SK-N-SH (cell line): ENCODE measurements at regions of chr2 and their contacts with region 1.

Region 1: DNA sequence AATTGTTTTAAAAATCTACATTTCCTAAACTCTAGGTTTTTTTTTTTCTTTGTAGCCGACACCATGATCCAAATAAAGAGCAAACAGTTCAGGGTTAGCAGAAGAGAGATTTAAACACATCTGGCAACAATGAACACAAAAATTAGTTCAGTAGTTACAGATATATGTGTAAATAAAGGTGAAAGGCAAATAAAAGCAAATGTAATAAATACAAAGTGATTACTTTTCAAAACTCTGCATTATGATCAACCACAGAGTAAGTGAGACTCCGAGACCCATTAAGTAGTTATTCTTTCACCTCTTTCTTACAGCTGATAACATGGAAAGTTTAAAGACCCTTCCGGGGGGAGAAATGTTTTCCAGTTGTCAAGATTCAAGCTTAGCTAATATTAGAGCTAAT is 716 bp downstream of the CALCRL start:
- DNase-seq: no peak
- H3K4me3 ChIP-seq: no peak overlapping the region
- H3K27ac ChIP-seq: no peak overlapping the region
- H3K4me1 ChIP-seq: peaks cover 0 to 6% of the 10 kb centered on the region in 2 experiments; a peak in 2 of 4 replicates
- H3K27me3 ChIP-seq: no peaks in the 10 kb centered on the region
- CTCF ChIP-seq: no peak
- EP300 ChIP-seq: no peak
- RAD21 ChIP-seq: no peak

Region 2: GRCh38 chr2:186903216-186903615 is 544.1 kb before region 1 on chr2:
- CTCF ChIA-PET with region 1: interaction called, 10 read pairs
- POLR2A ChIA-PET with region 1: no interaction called
- DNase-seq: peak; percentile 3
- H3K4me3 ChIP-seq: no peak overlapping the region
- H3K27ac ChIP-seq: no peak overlapping the region
- H3K4me1 ChIP-seq: no peaks in the 10 kb centered on the region; a peak in 1 of 4 replicates
- H3K27me3 ChIP-seq: no peaks in the 10 kb centered on the region
- CTCF ChIP-seq: peak; percentile 70
- EP300 ChIP-seq: no peak
- RAD21 ChIP-seq: peak; percentile 61

Region 3: GRCh38 chr2:187138265-187138664 is 309.1 kb before region 1 on chr2:
- CTCF ChIA-PET with region 1: interaction called, 10 read pairs
- POLR2A ChIA-PET with region 1: no interaction called
- DNase-seq: peak; percentile 3
- H3K4me3 ChIP-seq: no peak overlapping the region
- H3K27ac ChIP-seq: no peak overlapping the region
- H3K4me1 ChIP-seq: no peaks in the 10 kb centered on the region
- H3K27me3 ChIP-seq: no peaks in the 10 kb centered on the region
- CTCF ChIP-seq: peak; percentile 69
- EP300 ChIP-seq: no peak
- RAD21 ChIP-seq: peak; percentile 74

Region 4: DNA sequence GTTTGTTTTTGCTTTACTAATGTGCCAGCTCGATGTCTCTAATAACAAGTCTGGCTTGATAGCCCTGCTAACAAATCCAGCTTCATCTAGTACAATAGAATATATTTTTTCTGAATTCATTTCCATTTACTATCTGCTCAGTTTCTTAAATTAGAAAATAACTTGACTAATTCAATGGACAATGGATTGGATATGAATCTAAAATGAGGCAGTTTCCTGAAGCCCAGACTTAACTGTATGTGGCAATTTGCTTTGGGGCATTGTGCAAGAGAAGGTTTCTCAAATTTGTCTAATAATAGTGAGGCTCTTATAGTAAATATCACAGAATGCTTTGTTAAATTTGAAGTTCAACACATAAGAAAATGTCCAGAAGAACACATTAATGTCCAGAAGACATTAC is 25.1 kb before region 1 on chr2:
- CTCF ChIA-PET with region 1: no interaction called
- POLR2A ChIA-PET with region 1: no interaction called
- DNase-seq: no peak
- H3K4me3 ChIP-seq: no peak overlapping the region
- H3K27ac ChIP-seq: no peak overlapping the region
- H3K4me1 ChIP-seq: no peaks in the 10 kb centered on the region; a peak in 1 of 4 replicates
- H3K27me3 ChIP-seq: no peaks in the 10 kb centered on the region
- CTCF ChIP-seq: no peak
- EP300 ChIP-seq: no peak
- RAD21 ChIP-seq: no peak

Region 5: GRCh38 chr2:187509667-187510417 is 62.5 kb after region 1 on chr2:
- CTCF ChIA-PET with region 1: no interaction called
- POLR2A ChIA-PET with region 1: no interaction called
- DNase-seq: no peak
- H3K4me3 ChIP-seq: no peak overlapping the region
- H3K27ac ChIP-seq: no peak overlapping the region
- H3K4me1 ChIP-seq: no peaks in the 10 kb centered on the region; a peak in 1 of 4 replicates
- H3K27me3 ChIP-seq: no peaks in the 10 kb centered on the region
- CTCF ChIP-seq: no peak
- EP300 ChIP-seq: no peak
- RAD21 ChIP-seq: no peak

Region 6: GRCh38 chr2:187547353-187547979 is 100.1 kb after region 1 on chr2:
- CTCF ChIA-PET with region 1: no interaction called
- POLR2A ChIA-PET with region 1: no interaction called
- DNase-seq: no peak
- H3K4me3 ChIP-seq: no peak overlapping the region
- H3K27ac ChIP-seq: peak overlapping the region in 1 of 2 experiments; percentile 85; a peak in 3 of 4 replicates
- H3K4me1 ChIP-seq: peaks cover 0 to 35% of the 10 kb centered on the region in 2 experiments; a peak in 2 of 4 replicates
- H3K27me3 ChIP-seq: no peaks in the 10 kb centered on the region
- CTCF ChIP-seq: no peak
- EP300 ChIP-seq: peak in 1 of 2 experiments; percentile 48; a peak in 2 of 4 replicates
- RAD21 ChIP-seq: no peak